ENCODE measurements at regions of chrX and their contacts with region 1.

Region 1: DNA sequence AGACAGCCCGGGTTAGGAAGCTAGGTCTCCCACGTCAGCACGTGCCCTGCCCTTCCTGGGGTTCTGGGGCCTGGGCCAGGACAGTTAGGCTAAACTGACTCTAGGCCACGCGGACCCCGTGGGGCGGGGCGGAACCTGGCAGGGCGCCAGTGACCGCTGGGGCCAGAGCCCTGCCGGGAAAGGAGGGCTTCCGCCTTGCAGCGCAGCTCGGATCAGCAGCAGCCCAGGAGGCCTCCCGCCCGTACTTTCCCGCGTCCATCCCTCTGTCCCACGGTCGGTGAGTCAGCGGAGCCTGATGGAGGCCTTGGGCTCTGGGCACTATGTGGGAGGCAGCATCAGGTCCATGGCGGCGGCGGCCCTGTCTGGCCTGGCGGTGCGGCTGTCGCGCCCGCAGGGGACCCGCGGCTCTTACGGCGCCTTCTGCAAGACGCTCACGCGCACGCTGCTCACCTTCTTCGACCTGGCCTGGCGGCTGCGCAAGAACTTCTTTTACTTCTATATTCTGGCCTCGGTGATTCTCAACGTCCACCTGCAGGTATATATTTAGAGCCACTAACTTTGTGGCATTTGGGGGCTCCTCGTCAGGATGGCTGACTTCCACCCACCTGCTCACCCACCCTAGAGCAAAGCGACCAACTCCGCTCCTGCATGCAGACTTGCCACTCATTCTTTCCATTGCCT is at the start of gene SMIM10:
- DNase-seq: peak; percentile 87
- H3K4me3 ChIP-seq: peak within 1 kb of the TSS; percentile 34 to 54 (median 52)
- H3K27ac ChIP-seq: peak within 1 kb of the TSS; percentile 49 to 60 (median 58)
- H3K4me1 ChIP-seq: no peaks in the 10 kb centered on the region
- H3K27me3 ChIP-seq: peaks cover 0 to under 1% (median 0%) of the 10 kb centered on the region in 3 donors
- CTCF ChIP-seq: no peak
- EP300 ChIP-seq: no peak
- POLR2A ChIP-seq: no peak
- total RNA-seq, gene SMIM10: 6.6 to 11.3 (median 10.2) TPM

Region 2: GRCh38 chrX:134807039-134807731 is 183.8 kb before region 1 on chrX:
- intact Hi-C with region 1: loop called (anchors 10 kb)
- DNase-seq: peak; percentile 95
- H3K4me3 ChIP-seq: peak overlapping the region; percentile 56 to 63 (median 58)
- H3K27ac ChIP-seq: peak overlapping the region; percentile 83 to 86 (median 84)
- H3K4me1 ChIP-seq: no peaks in the 10 kb centered on the region
- H3K27me3 ChIP-seq: no peaks in the 10 kb centered on the region
- CTCF ChIP-seq: no peak
- EP300 ChIP-seq: no peak
- POLR2A ChIP-seq: peak; percentile 19 to 42

Region 3: DNA sequence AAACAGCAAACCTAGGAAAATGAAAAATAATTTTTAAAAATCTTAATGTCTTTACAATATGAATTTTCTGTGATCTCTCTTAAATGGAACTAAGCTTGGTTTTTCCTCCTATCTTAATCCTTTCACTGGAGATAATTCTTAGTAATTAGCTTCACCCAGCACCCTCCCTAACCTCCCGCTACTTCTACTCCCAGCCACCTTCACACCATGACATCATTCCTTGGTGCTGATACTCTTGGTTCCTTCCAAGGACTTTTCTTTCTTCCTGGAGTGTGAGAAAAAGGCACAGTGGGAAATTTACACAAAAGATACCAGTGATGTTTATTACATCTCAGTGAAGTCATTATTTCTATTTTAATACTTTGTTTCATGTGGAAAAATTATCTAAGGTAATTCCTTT is 169.0 kb before region 1 on chrX:
- intact Hi-C with region 1: no loop called
- DNase-seq: no peak
- H3K4me3 ChIP-seq: no peak overlapping the region
- H3K27ac ChIP-seq: no peak overlapping the region
- H3K4me1 ChIP-seq: no peaks in the 10 kb centered on the region
- H3K27me3 ChIP-seq: no peaks in the 10 kb centered on the region
- CTCF ChIP-seq: no peak
- EP300 ChIP-seq: no peak
- POLR2A ChIP-seq: no peak

Region 4: GRCh38 chrX:134936542-134936941 is 54.4 kb before region 1 on chrX:
- intact Hi-C with region 1: no loop called
- DNase-seq: no peak
- H3K4me3 ChIP-seq: no peak overlapping the region
- H3K27ac ChIP-seq: peak overlapping the region in 3 of 4 donors; percentile 39 to 59 (median 40)
- H3K4me1 ChIP-seq: peaks cover 0 to 9% (median 4%) of the 10 kb centered on the region in 4 donors
- H3K27me3 ChIP-seq: no peaks in the 10 kb centered on the region
- CTCF ChIP-seq: no peak
- EP300 ChIP-seq: no peak
- POLR2A ChIP-seq: no peak

Region 5: DNA sequence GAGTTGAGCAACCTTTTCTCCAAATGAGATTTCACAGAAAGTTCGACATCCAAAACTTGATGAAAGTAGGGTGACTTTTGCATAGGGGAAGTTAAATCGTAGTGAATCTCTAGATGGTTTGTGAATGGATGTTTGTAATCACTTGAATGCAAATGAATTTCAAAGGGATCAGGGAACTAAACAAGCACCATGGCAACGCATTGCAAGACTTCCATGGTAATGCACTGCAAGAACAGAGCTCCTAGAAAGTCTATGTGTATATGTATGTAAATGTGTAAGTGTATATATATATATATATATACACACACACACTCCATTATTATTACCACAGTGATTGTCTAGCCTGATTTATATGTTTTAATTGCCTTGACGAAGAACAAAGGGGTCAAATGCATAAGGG is 556.8 kb after region 1 on chrX:
- intact Hi-C with region 1: no loop called
- DNase-seq: no peak
- H3K4me3 ChIP-seq: no peak overlapping the region
- H3K27ac ChIP-seq: no peak overlapping the region
- H3K4me1 ChIP-seq: no peaks in the 10 kb centered on the region
- H3K27me3 ChIP-seq: no peaks in the 10 kb centered on the region
- CTCF ChIP-seq: no peak
- EP300 ChIP-seq: no peak
- POLR2A ChIP-seq: no peak